Adrenal gland (tissue), 19 donors: ENCODE measurements at regions of chr6 and their contacts with region 1.

Region 1: DNA sequence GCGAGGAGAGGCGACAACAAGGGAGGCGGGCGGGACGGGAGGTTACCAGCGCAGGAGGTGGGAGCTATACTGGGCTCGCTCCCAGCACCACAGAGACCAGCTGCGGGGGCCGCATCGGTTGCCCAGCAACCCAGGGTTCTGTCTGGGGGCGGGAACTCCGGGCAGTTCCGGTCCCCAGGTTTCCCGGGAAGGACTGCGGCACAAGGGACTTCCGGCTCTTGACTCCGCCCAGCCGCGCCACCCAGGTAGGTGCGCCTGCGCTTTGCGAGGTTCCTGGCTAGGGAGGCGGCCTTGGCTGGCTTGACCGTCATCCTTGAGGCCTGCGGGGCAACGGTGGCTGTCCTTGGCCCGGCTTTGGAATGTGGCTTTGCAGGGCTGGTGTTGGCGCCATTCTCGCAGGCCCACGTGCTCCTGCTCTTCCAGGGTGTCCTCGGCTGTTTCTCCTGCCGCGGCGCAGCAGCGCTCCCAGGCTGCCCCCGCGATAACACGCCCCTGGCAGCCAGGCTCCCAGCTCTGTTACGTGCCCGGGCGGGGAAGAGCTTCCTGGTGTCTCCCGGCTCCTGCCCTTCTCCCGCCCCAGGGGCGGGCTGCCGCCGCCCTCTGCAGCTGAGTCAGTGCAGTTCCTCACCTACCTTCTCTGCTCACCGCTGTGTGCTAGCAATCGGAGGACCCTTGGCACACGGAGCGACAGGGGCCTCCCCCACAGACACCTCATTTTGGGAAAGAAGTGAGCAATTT is at the start of gene RSPH3:
- DNase-seq: peak; percentile 96 to 99 (median 98)
- H3K4me3 ChIP-seq: peak within 1 kb of the TSS; percentile 0 to 69 (median 48)
- H3K27ac ChIP-seq: peak within 1 kb of the TSS; percentile 56 to 92 (median 88)
- H3K4me1 ChIP-seq: peaks cover 0 to 10% of the 10 kb centered on the region in 2 donors
- H3K27me3 ChIP-seq: no peaks in the 10 kb centered on the region
- CTCF ChIP-seq: peak in 2 of 6 experiments; percentile 21 to 42
- POLR2A ChIP-seq: peak; percentile 55 to 88
- total RNA-seq, gene RSPH3: 7.9 to 20.5 (median 13.0) TPM

Region 2: DNA sequence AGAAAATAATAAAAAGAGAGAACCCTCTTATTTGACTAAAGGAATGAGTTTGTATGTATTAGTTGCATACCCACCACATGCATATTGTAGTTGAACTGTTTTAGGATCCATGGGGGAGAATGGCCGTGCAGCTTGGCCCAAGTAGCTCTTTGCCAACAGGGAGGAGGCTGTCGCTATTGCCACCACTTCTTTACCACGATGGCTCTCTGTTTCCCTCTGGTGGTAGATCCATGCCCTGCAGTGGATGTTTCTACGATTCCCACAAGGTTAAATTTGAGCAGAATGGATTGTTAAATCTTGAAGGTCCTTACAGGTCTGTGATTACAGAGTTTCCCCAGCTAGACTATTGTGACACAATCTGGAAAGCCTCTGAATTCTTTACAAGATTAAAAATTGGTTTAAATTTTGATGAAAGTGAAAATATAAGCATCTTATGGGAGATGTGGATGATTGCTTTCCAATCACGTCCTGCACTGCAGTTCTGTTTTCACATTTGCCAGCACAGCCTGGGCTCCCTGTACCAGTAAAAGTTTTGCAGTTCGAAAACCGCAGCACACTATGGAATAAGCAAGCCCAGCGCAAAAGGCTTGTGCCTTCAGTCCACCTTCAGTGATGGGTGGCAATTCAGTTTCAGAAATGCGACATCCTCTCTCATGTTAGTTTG is 135.0 kb after region 1 on chr6:
- intact Hi-C with region 1: loop called in 1 of 2 experiments (anchors 10 kb)
- DNase-seq: peak; percentile 75 to 93 (median 83)
- H3K4me3 ChIP-seq: no peak overlapping the region
- H3K27ac ChIP-seq: no peak overlapping the region
- H3K4me1 ChIP-seq: no peaks in the 10 kb centered on the region
- H3K27me3 ChIP-seq: no peaks in the 10 kb centered on the region
- CTCF ChIP-seq: peak; percentile 93 to 97 (median 96)
- POLR2A ChIP-seq: no peak

Region 3: GRCh38 chr6:159761873-159762680 is 762.2 kb after region 1 on chr6 and contains the start of gene ACAT2:
- intact Hi-C with region 1: no loop called
- DNase-seq: peak; percentile 95 to 98 (median 97)
- H3K4me3 ChIP-seq: peak within 1 kb of the TSS; percentile 30 to 91 (median 74)
- H3K27ac ChIP-seq: peak within 1 kb of the TSS; percentile 99 to 100 (median 99)
- H3K4me1 ChIP-seq: peaks cover 6 to 24% of the 10 kb centered on the region in 2 donors
- H3K27me3 ChIP-seq: no peaks in the 10 kb centered on the region
- CTCF ChIP-seq: peak in 4 of 6 experiments; percentile 9 to 48 (median 34)
- POLR2A ChIP-seq: peak in 1 of 2 donors; percentile 70
- total RNA-seq, gene ACAT2: 8.7 to 272 (median 19.0) TPM